Activated T-helper 1 cell treated with anti-CD3 and anti-CD28 coated beads, Interleukin-12 subunit alpha, Interleukin-12 subunit beta, Interleukin-2, Interleukin-4 antibody, amounts not matched to agents 30 ng/mL and 10 ng/mL and 1 ng/mL, durations not matched to agents 14 hours and 24 hours and 36 hours (primary cell): ENCODE measurements at regions of chr12 and their contacts with region 1.

Region 1: DNA sequence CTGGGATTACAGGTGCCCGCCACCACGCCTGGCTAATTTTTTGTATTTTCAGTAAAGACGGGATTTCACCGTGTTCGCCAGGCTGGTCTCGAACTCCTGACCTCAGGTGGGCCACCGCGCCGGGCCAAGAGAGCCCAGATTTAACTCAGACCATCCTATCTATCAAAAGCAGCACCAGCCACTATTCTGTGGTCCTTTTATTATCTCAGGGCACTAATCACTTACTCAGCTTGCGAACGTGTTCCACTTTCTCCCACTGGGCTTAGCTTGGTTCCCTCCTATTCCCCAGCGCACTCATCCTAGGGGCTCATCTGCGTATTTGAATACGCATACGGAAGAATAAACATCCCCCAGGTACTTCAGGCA is 16.2 kb upstream of the AACS start:
- DNase-seq: no peak
- H3K4me3 Mint-ChIP-seq: peak overlapping the region; percentile 88
- H3K27ac Mint-ChIP-seq: peak overlapping the region; percentile 75
- H3K4me1 Mint-ChIP-seq: peaks cover 13% of the 10 kb centered on the region
- H3K27me3 Mint-ChIP-seq: no peaks in the 10 kb centered on the region

Region 2: DNA sequence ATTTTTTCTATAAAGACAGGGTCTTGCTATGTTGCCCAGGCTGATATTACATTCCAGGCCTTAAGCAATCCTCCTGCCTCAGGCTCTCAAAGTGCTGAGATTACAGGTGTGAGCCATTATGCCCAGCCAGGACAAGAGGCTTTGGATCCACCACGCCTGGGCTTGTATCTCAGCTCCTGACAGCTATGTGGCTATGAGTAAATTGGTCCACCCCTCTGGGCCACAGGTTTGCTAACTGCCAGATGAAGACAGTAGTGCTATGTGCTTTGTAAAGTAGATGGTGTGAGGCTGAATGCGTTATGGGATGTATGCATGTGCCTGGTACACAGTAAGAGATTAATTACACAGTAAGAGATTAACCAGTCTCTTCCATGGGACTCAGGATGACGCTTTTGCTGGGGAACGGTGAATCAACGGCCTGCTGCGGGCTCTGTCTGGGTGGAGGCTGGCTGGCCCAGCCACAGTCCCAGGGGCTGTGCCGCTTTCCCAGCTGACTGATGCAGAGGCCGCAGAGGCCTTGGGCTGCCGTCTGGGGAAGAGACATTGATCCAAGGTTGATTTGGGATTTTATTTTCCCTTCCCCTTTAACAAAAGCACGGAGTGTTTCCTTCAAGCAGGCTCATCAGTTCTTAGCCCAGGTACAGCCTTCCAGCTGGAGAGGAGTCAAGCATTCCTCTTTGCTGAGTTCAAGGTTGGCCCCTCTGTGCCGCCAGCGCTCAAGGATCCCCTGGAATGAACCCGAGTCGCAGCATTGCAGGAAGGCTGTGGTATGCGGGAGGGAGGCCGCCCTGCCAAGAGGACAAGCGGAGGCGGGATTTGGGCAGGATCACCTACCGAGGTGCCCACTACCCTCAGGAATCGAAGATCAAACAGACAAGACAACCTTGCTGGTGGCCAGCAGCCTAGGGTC is 428.1 kb before region 1 on chr12:
- intact Hi-C with region 1: no loop called
- DNase-seq: no peak
- H3K4me3 Mint-ChIP-seq: no peak overlapping the region
- H3K27ac Mint-ChIP-seq: no peak overlapping the region
- H3K4me1 Mint-ChIP-seq: no peaks in the 10 kb centered on the region
- H3K27me3 Mint-ChIP-seq: no peaks in the 10 kb centered on the region

Region 3: GRCh38 chr12:124863416-124864325 is 185.4 kb before region 1 on chr12 and contains the start of gene SCARB1:
- intact Hi-C with region 1: loop called (anchors 5 kb)
- DNase-seq: peak; percentile 70
- H3K4me3 Mint-ChIP-seq: peak within 1 kb of the TSS; percentile 85
- H3K27ac Mint-ChIP-seq: peak within 1 kb of the TSS; percentile 90
- H3K4me1 Mint-ChIP-seq: peaks cover 23% of the 10 kb centered on the region
- H3K27me3 Mint-ChIP-seq: peaks cover 2% of the 10 kb centered on the region
- total RNA-seq, gene SCARB1: 17.9 and 18.5 TPM in 2 replicates

Region 4: DNA sequence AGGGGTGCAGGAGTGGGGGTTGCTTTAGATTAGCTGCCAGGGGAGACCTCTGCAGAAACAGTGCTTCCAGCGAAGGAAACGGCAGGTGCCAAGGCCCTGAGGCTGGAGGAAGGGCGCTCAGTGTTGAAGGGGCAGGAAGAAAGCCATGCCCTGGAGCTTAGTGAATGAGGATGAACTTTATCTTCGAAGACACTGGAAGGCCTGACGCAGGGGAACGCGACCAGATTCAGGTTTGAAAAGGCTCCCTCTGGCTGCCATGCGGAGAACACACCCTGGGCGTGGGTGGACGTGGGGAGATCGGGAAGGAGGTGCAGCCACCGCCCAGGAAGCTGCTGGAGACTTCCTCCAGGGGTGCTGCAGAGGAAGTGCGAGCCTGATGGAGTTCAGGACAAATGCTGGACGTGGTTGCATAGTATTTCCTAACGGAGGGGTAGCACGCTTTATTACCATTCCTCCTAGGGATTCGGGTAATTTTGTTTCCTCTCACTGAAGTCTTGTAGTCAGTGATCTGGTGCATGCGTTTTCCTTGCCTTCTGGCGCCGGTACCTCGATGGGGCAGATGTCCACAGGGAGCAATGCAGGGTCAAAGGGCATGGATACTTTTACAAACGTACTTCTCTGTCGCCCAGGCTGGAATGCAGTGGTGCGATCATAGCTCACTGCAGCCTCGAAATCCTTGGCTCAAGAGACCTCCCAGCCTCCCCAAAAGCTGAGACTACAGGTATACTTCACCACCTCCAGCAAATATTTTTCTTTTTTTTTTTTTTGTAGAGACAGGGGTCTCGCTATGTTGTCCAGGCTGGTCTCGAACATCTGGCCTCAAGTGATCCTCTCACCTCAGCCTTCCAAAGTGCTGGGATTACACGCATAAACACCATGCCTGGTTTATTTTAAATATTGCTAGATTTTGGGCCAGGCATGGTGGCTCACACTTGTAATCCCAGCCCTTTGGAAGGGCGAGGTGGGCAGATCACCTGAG is 108.2 kb before region 1 on chr12:
- intact Hi-C with region 1: loop called (anchors 1 kb)
- DNase-seq: peak; percentile 80
- H3K4me3 Mint-ChIP-seq: no peak overlapping the region
- H3K27ac Mint-ChIP-seq: no peak overlapping the region
- H3K4me1 Mint-ChIP-seq: no peaks in the 10 kb centered on the region
- H3K27me3 Mint-ChIP-seq: no peaks in the 10 kb centered on the region

Region 5: DNA sequence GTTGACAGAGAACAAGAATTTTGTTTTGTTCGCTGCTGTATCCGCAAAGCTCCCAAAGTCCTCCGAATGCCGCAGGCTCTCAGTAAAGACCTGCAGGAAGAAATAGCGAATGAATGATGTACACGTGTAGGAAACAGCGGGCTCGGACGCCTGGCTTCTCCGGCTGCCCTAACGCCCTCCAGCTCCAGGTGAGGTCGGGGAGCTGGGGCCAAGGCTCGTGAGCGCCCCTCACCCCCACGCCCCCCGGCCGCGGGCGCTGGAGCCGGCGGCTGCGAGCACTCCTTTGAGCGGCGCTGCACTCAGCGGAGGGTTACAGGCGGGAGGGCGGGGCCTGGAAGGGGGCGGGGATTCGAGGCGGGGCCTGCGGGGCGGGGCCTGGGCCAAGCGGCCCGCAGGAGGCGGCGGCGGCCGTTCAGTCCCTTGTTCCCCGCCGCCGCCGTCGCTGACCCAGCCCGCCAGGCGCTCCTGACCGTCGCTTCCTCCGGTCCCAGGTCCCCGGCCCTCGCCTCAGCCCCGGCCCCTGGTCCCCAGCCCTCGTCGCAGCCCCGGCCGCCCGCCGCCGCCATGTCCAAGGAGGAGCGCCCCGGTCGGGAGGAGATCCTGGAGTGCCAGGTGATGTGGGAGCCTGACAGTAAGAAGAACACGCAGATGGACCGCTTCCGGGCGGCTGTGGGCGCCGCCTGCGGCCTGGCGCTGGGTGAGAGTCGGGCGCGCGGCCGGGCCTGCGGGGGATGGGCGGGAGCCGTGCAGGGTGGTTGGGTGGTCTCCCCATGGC is 16.1 kb after region 1 on chr12 and contains the start of gene AACS:
- intact Hi-C with region 1: loop called (anchors 1 kb)
- DNase-seq: peak; percentile 58
- H3K4me3 Mint-ChIP-seq: peak within 1 kb of the TSS; percentile 84
- H3K27ac Mint-ChIP-seq: peak within 1 kb of the TSS; percentile 40
- H3K4me1 Mint-ChIP-seq: peaks cover 17% of the 10 kb centered on the region
- H3K27me3 Mint-ChIP-seq: peaks cover 7% of the 10 kb centered on the region
- total RNA-seq, gene AACS: 26.7 and 27.8 TPM in 2 replicates

Region 6: GRCh38 chr12:125305231-125305630 is 256.2 kb after region 1 on chr12:
- intact Hi-C with region 1: no loop called
- DNase-seq: no peak
- H3K4me3 Mint-ChIP-seq: no peak overlapping the region
- H3K27ac Mint-ChIP-seq: no peak overlapping the region
- H3K4me1 Mint-ChIP-seq: no peaks in the 10 kb centered on the region
- H3K27me3 Mint-ChIP-seq: peaks cover 3% of the 10 kb centered on the region